Caco-2 (cell line): ENCODE measurements at regions of chr10 and their contacts with region 1.

Region 1: GRCh38 chr10:68720793-68721672 is at the start of gene CCAR1:
- DNase-seq: peak; percentile 100
- H3K4me3 ChIP-seq: peak within 1 kb of the TSS; percentile 89
- H3K4me3 Mint-ChIP-seq: peak within 1 kb of the TSS; percentile 86
- H3K27ac Mint-ChIP-seq: peak within 1 kb of the TSS; percentile 99
- H3K4me1 ChIP-seq: peaks cover 7% of the 10 kb centered on the region
- H3K4me1 Mint-ChIP-seq: peaks cover 9% of the 10 kb centered on the region
- H3K27me3 ChIP-seq: no peaks in the 10 kb centered on the region
- H3K27me3 Mint-ChIP-seq: no peaks in the 10 kb centered on the region
- CTCF ChIP-seq: no peak
- total RNA-seq, gene CCAR1: 180 and 189 TPM in 2 replicates

Region 2: GRCh38 chr10:68406815-68407548 is 314.1 kb before region 1 on chr10 and contains the start of gene RUFY2:
- CTCF ChIA-PET with region 1: no interaction called
- POLR2A ChIA-PET with region 1: no interaction called
- intact Hi-C with region 1: loop called (anchors 1 kb)
- DNase-seq: peak; percentile 89 to 98
- H3K4me3 ChIP-seq: peak within 1 kb of the TSS; percentile 99
- H3K4me3 Mint-ChIP-seq: peak within 1 kb of the TSS; percentile 95
- H3K27ac Mint-ChIP-seq: peak within 1 kb of the TSS; percentile 97
- H3K4me1 ChIP-seq: peaks cover 7% of the 10 kb centered on the region; the same call in 1 of the 2 replicates
- H3K4me1 Mint-ChIP-seq: peaks cover 16% of the 10 kb centered on the region
- H3K27me3 ChIP-seq: no peaks in the 10 kb centered on the region
- H3K27me3 Mint-ChIP-seq: no peaks in the 10 kb centered on the region
- CTCF ChIP-seq: peak; percentile 63 to 81
- total RNA-seq, gene RUFY2: 42.4 and 44.0 TPM in 2 replicates

Region 3: GRCh38 chr10:68526626-68527307 is 194.3 kb before region 1 on chr10:
- CTCF ChIA-PET with region 1: no interaction called
- POLR2A ChIA-PET with region 1: no interaction called
- intact Hi-C with region 1: loop called (anchors 1 kb)
- DNase-seq: no peak
- H3K4me3 ChIP-seq: peak overlapping the region; percentile 62
- H3K4me3 Mint-ChIP-seq: peak overlapping the region; percentile 84
- H3K27ac Mint-ChIP-seq: peak overlapping the region; percentile 89
- H3K4me1 ChIP-seq: peaks cover 9% of the 10 kb centered on the region
- H3K4me1 Mint-ChIP-seq: peaks cover 5% of the 10 kb centered on the region
- H3K27me3 ChIP-seq: no peaks in the 10 kb centered on the region
- H3K27me3 Mint-ChIP-seq: no peaks in the 10 kb centered on the region
- CTCF ChIP-seq: no peak

Region 4: DNA sequence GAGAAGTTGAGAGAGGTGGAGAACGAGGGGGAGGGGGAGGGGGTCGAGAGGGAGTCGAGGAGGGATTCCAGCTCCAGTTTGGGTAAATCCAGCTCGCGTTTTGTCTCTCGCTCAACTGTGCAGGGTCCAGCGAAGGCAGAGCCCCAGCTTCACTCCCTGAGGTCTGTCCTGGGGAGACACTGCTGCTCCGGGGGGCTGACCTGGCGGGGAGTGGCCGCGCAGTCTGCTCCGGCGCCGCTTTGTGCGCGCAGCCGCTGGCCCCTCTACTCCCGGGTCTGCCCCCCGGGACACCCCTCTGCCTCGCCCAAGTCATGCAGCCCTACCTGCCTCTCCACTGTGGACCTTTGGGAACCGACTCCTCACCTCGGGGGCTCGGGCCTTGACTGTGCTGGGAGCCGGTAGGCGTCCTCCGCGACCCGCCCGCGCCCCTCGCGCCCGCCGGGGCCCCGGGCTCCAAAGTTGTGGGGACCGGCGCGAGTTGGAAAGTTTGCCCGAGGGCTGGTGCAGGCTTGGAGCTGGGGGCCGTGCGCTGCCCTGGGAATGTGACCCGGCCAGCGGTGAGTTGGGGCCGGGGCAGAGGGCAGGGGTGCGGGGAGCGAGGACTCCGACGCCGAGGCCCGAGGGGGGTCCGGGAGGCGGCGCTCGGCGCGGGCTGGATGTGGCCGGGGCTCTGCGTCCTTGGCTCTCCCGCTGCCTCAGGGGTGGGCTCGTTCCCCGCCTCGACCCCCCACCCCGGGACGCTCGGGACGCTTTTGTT is 160.7 kb before region 1 on chr10 and contains the start of gene TET1:
- CTCF ChIA-PET with region 1: no interaction called
- POLR2A ChIA-PET with region 1: interaction called, 8 read pairs
- intact Hi-C with region 1: loop called (anchors 2 kb)
- DNase-seq: peak; percentile 88 to 91
- H3K4me3 ChIP-seq: peak within 1 kb of the TSS; percentile 93
- H3K4me3 Mint-ChIP-seq: peak within 1 kb of the TSS; percentile 76
- H3K27ac Mint-ChIP-seq: peak within 1 kb of the TSS; percentile 3
- H3K4me1 ChIP-seq: peaks cover 10% of the 10 kb centered on the region; the same call in 1 of the 2 replicates
- H3K4me1 Mint-ChIP-seq: peaks cover 16% of the 10 kb centered on the region
- H3K27me3 ChIP-seq: no peaks in the 10 kb centered on the region
- H3K27me3 Mint-ChIP-seq: no peaks in the 10 kb centered on the region
- CTCF ChIP-seq: no peak
- total RNA-seq, gene TET1: 18.6 and 19.1 TPM in 2 replicates

Region 5: DNA sequence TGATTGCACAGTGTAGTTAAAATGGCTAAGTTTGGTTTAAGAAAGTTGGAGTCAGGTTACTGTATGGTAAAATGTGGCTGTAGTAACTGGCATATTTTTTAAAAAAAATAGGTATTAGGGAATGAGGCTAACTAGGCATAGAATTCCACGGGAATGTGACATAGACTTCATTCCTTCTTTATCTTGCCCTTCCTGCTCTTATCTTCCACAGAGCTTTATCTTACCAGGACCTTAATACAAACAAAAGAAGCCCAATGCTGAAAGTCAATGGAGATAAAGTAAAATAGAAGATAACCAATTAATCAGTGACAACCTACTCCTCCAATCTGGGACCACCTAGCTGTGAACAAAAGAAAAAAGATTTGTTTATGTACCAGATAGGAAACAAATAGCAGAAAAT is 102.8 kb before region 1 on chr10:
- CTCF ChIA-PET with region 1: no interaction called
- POLR2A ChIA-PET with region 1: interaction called, 3 read pairs
- intact Hi-C with region 1: loop called (anchors 2 kb)
- DNase-seq: peak in 1 of 2 experiments; percentile 60
- H3K4me3 ChIP-seq: no peak overlapping the region
- H3K4me3 Mint-ChIP-seq: peak overlapping the region; percentile 64
- H3K27ac Mint-ChIP-seq: peak overlapping the region; percentile 88
- H3K4me1 ChIP-seq: peaks cover 37% of the 10 kb centered on the region
- H3K4me1 Mint-ChIP-seq: peaks cover 30% of the 10 kb centered on the region
- H3K27me3 ChIP-seq: no peaks in the 10 kb centered on the region
- H3K27me3 Mint-ChIP-seq: no peaks in the 10 kb centered on the region
- CTCF ChIP-seq: no peak

Region 6: DNA sequence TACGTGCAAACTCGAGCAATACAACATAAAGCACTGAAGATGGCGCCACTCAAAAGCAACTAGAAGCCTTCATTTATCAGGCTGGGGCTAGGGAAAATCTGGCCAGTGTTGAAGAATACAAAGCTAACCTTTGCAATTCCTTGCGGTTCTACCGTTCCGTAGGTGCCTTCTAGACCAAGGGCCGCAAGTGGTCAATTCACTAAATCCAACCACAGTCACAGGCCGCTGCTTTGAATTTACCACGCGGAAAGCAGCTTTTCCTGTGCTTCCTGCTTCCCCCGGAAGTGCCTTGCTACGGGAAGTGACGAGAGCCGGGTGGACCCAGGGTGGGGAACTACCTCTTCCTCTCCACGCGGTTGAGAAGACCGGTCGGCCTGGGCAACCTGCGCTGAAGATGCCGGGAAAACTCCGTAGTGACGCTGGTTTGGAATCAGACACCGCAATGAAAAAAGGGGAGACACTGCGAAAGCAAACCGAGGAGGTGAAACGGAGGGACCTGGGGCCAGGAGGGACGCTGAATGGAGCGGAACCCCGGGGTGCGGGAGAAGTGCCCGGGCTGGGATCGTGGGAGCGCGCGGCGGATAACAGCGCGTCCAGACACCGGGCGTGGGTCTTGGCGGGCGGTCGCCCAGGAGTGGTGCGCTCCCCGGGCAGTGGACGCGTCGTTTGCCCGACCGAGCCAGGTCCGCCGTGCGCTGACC is 234.9 kb after region 1 on chr10 and contains the start of gene DDX21:
- CTCF ChIA-PET with region 1: no interaction called
- POLR2A ChIA-PET with region 1: interaction called, 3 read pairs
- intact Hi-C with region 1: loop called (anchors 2 kb)
- DNase-seq: peak; percentile 96 to 97
- H3K4me3 ChIP-seq: peak within 1 kb of the TSS; percentile 95
- H3K4me3 Mint-ChIP-seq: peak within 1 kb of the TSS; percentile 92
- H3K27ac Mint-ChIP-seq: peak within 1 kb of the TSS; percentile 97
- H3K4me1 ChIP-seq: peaks cover 11% of the 10 kb centered on the region
- H3K4me1 Mint-ChIP-seq: no peaks in the 10 kb centered on the region
- H3K27me3 ChIP-seq: no peaks in the 10 kb centered on the region
- H3K27me3 Mint-ChIP-seq: no peaks in the 10 kb centered on the region
- CTCF ChIP-seq: peak; percentile 88 to 96
- total RNA-seq, gene DDX21: 239 and 243 TPM in 2 replicates